Activated T-helper 2 cell treated with anti-CD3 and anti-CD28 coated beads, Interferon-gamma antibody, Interleukin-2, Interleukin-4, amounts not matched to agents 10 μg/mL and 5 μg/mL and 100 μg/mL, durations not matched to agents 14 hours and 24 hours and 36 hours (primary cell): ENCODE measurements at regions of chr3 and their contacts with region 1.

Region 1: DNA sequence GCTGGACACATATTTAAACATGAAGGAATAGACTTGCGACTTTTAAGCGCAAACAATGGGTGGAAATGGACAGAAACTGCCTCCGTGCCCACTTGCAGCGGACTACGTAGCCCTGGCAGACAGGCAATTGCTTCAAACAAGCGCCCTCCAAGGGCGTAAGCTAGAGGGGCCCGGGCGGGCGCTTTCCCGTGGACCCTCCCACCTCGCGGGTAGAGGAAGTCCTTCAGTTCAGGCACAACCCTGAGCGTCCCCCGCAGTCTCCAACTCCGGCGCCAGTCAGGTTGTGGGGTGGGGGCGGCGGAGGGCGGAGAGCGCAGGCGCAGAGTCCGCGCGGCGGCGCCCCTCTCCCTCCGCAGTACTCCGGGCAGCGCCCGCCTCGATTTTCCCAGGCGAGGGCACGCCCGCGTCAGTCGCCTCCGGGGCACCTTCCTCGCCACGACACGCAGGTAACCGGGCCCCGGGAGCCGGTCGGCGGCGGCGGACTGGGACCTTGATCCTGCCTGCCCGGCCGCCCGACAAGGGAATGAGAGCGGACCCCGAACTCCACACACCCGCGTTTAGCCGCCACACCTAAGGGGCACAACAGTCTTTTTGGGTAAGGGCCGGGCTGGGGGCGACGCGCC is at the start of gene SLC35G2:
- DNase-seq: no peak
- H3K4me3 Mint-ChIP-seq: peak within 1 kb of the TSS; percentile 85
- H3K27ac Mint-ChIP-seq: peak within 1 kb of the TSS; percentile 83
- H3K4me1 Mint-ChIP-seq: peaks cover 23% of the 10 kb centered on the region
- H3K27me3 Mint-ChIP-seq: peaks cover 31% of the 10 kb centered on the region
- total RNA-seq, gene SLC35G2: 7.3 and 7.7 TPM in 2 replicates

Region 2: DNA sequence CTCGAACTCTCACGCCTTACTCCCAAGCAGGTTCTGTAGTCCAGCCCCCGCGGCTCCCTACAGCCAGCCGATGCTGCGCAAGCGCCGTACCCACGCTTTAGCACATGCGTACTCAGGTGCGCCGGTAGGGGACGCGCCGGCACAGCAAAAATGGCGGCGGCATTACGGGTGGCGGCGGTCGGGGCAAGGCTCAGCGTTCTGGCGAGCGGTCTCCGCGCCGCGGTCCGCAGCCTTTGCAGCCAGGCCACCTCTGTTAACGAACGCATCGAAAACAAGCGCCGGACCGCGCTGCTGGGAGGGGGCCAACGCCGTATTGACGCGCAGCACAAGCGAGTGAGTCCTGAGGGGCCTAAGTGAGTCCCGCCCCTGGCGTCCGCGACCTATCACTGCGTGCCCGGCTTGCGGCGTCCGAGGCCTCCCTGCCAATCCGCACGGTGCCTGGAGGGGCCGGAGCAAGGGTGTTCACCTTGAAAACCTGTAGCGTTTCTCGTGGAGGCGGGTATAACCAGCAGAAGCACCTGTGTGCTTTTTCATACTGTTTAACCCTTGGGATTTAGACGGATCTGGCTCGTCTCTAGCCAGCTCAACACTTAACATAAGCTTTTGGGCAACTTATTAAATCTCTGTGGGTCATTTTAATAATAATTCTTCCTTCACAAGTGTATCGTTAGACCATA is 568.5 kb before region 1 on chr3 and contains the start of gene PCCB:
- intact Hi-C with region 1: loop called (anchors 2 kb)
- DNase-seq: peak; percentile 89
- H3K4me3 Mint-ChIP-seq: peak within 1 kb of the TSS; percentile 88
- H3K27ac Mint-ChIP-seq: peak within 1 kb of the TSS; percentile 90
- H3K4me1 Mint-ChIP-seq: peaks cover 17% of the 10 kb centered on the region
- H3K27me3 Mint-ChIP-seq: no peaks in the 10 kb centered on the region
- total RNA-seq, gene PCCB: 44.5 and 47.5 TPM in 2 replicates

Region 3: DNA sequence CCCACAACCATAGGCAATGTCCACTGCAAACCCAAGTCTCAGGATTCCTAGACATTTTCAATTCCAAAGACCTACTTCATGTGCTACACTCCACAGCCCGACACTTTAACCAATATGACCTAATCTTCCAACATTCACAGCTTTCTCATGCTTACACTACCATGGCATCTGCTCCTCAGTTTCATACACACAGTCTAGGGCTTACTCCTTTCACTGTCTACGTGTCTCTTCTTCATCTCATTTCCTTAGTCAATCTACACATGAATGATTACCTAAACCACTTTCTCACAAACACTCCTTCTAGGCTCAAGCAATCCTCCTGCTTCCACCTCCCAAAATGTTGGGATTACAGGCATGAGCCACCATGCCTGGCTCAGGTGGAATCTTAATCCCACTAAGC is 173.0 kb before region 1 on chr3:
- intact Hi-C with region 1: no loop called
- DNase-seq: no peak
- H3K4me3 Mint-ChIP-seq: no peak overlapping the region
- H3K27ac Mint-ChIP-seq: no peak overlapping the region
- H3K4me1 Mint-ChIP-seq: peaks cover 15% of the 10 kb centered on the region
- H3K27me3 Mint-ChIP-seq: no peaks in the 10 kb centered on the region

Region 4: GRCh38 chr3:136838641-136839555 is 20.0 kb after region 1 on chr3:
- intact Hi-C with region 1: loop called (anchors 1 kb)
- DNase-seq: no peak
- H3K4me3 Mint-ChIP-seq: peak overlapping the region; percentile 10
- H3K27ac Mint-ChIP-seq: peak overlapping the region; percentile 58
- H3K4me1 Mint-ChIP-seq: peaks cover 41% of the 10 kb centered on the region
- H3K27me3 Mint-ChIP-seq: no peaks in the 10 kb centered on the region